AG04449 (cell line): ENCODE measurements at regions of chr13 and their contacts with region 1.

Region 1: DNA sequence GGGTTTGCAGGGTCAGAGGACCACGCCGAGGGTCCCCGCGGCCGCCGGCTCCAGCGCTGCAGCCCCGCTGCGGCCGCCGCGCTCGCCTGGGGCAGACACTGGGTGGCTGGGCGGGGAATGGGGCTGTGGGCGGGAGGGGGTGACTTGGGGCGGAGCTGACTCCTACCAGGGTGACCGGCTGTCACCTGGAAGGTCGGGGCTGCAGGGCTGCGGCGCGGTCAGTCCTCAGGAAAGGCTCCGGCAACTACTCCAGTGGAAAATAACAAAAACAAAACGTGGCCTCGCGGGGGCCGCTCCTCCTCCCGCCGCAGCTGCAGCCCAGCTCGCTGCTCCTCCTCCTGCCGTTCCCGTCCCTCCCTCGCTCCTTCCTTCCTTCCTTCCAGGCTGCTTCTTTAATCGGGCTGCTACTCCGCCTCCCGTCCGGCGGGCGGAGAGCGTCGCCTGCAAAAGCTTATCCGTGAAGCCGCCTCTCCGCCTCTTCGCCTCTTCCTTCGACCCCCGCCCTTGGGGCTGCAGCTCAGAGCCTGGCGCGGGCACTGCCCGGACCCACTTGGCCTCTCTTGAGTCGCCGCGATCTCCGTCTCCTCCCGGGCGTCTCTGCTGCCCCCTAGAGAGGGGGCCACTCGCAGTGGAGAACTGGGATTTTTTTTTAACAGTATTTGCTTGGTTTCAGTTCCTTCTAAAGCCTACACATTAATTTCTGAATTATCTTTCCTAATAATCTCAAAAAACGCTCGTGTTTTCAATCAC is at the start of gene TBC1D4:
- DNase-seq: peak; percentile 44
- H3K4me3 ChIP-seq: peak within 1 kb of the TSS; percentile 70
- CTCF ChIP-seq: peak; percentile 61

Region 2: GRCh38 chr13:75365724-75366173 is 116.5 kb before region 1 on chr13:
- CTCF ChIA-PET with region 1: interaction called, 15 read pairs
- POLR2A ChIA-PET with region 1: interaction called, 5 read pairs
- DNase-seq: no peak
- H3K4me3 ChIP-seq: no peak overlapping the region
- CTCF ChIP-seq: no peak

Region 3: GRCh38 chr13:75495938-75496337 is 13.7 kb after region 1 on chr13:
- CTCF ChIA-PET with region 1: interaction called, 25 read pairs
- POLR2A ChIA-PET with region 1: interaction called, 3 read pairs
- DNase-seq: peak; percentile 76
- H3K4me3 ChIP-seq: no peak overlapping the region
- CTCF ChIP-seq: no peak

Region 4: DNA sequence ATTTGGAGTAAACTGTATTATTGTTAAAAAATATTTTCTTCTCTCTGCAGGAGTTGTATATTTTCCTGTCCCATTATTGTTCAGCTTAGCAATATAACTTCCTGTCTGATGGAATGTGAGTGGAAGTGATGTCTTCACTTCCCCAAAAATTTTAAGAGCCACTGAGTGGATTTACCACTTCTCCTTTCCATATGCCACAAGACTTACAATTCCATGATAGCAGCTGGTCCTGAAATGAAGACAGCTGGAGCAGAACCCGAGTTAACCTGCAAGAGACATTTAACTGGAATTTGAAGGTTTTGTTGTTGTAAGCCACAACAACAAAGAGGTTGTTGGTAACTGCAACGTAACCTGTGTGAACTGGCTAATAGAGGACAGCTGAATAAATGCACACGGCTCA is 23.1 kb after region 1 on chr13:
- CTCF ChIA-PET with region 1: interaction called, 13 read pairs
- POLR2A ChIA-PET with region 1: no interaction called
- DNase-seq: no peak
- H3K4me3 ChIP-seq: no peak overlapping the region
- CTCF ChIP-seq: no peak

Region 5: GRCh38 chr13:75537401-75538365 is 55.4 kb after region 1 on chr13 and contains the start of gene COMMD6:
- CTCF ChIA-PET with region 1: interaction called, 44 read pairs
- POLR2A ChIA-PET with region 1: interaction called, 5 read pairs
- DNase-seq: peak; percentile 85
- H3K4me3 ChIP-seq: peak within 1 kb of the TSS; percentile 78
- CTCF ChIP-seq: peak; percentile 51

Region 6: DNA sequence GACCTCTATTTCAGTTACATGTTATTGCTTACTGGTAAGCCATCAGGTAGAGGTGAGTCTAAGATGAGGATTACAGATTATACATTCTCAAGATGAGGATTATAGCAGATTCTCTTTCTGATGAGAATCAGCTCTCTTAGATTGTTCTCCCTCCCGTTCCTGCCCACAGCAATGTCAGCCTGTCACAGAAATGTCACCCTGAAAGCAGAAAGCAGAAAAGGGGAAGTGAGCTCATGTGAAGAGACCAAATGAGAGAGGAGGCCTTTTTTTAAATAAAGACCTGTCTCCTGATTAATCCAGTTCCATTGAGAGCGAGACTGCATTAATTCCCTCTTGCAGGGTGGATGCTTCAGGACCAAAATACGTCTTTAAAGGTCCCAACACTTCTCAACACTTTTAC is 958.3 kb after region 1 on chr13:
- CTCF ChIA-PET with region 1: no interaction called
- POLR2A ChIA-PET with region 1: no interaction called
- DNase-seq: no peak
- H3K4me3 ChIP-seq: no peak overlapping the region
- CTCF ChIP-seq: no peak